Activated T-helper 1 cell treated with anti-CD3 and anti-CD28 coated beads, Interleukin-12 subunit alpha, Interleukin-12 subunit beta, Interleukin-2, Interleukin-4 antibody, amounts not matched to agents 30 ng/mL and 10 ng/mL and 1 ng/mL, durations not matched to agents 14 hours and 24 hours and 36 hours (primary cell): ENCODE measurements at regions of chrX and their contacts with region 1.

Region 1: DNA sequence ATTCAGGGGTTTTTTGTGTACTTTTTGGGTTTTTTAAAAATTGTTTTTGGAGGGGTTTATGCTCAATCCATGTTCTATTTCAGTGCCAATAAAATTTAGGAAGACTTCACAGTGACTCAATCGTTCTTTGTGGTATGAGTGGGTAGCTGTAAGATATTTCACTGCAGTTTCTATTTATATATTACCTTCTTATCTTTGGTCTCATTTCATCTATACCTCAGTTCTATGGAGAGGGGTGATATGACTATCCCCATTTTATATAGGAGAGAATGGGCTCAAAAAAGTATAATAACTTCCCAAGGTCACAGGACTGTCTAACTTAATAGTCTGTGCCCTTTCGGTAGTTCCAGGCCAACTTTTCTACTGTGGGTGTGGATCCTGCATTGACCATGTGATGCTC is 74.4 kb downstream of the MSN start:
- DNase-seq: no peak
- H3K4me3 Mint-ChIP-seq: peak overlapping the region; percentile 45
- H3K27ac Mint-ChIP-seq: peak overlapping the region; percentile 84
- H3K4me1 Mint-ChIP-seq: peaks cover 42% of the 10 kb centered on the region
- H3K27me3 Mint-ChIP-seq: no peaks in the 10 kb centered on the region

Region 2: GRCh38 chrX:65731684-65732289 is 10.0 kb before region 1 on chrX:
- intact Hi-C with region 1: loop called (anchors 1 kb)
- DNase-seq: no peak
- H3K4me3 Mint-ChIP-seq: no peak overlapping the region
- H3K27ac Mint-ChIP-seq: peak overlapping the region; percentile 80
- H3K4me1 Mint-ChIP-seq: peaks cover 33% of the 10 kb centered on the region
- H3K27me3 Mint-ChIP-seq: no peaks in the 10 kb centered on the region